Prostate gland (tissue), 2 donors: ENCODE measurements at regions of chr16 and their contacts with region 1.

Region 1: DNA sequence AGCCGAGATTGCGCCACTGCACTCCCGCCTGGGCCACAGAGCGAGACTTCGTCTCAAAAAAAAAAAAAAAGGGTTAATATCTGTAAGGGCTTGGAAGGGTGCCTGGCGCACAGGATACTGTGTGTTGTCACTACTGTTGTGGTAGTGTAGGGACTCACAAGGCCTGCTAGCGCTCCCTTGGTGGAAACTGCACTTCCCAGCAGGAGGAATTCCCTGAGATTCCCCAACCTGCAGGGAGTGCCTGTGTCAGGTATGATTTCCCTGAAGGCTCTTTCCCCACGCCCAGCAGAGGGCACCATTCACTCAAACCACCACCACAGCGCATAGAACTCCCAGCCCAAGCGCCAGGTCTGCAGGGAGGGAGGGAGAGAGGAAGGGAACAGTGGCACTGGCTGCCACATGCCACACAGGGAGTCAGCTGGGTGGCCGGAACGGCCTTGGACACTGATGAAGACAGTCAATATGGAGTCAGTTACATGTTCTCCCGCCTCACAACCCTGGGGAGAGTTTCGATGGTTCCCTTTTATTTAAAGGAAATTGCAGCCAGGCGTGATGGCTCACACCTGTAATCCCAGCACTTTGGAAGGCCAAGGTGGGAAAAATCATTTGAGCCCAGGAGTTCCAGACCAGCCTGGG is 32.7 kb upstream of the CDH1 start:
- DNase-seq: peak; percentile 91
- H3K4me3 ChIP-seq: no peak overlapping the region
- H3K27ac ChIP-seq: no peak overlapping the region
- H3K4me1 ChIP-seq: no peaks in the 10 kb centered on the region
- H3K27me3 ChIP-seq: no peaks in the 10 kb centered on the region
- CTCF ChIP-seq: peak; percentile 68 to 94 (median 90)
- POLR2A ChIP-seq: no peak

Region 2: GRCh38 chr16:68590201-68590994 is 114.0 kb before region 1 on chr16:
- intact Hi-C with region 1: loop called (anchors 10 kb)
- DNase-seq: peak; percentile 63
- H3K4me3 ChIP-seq: no peak overlapping the region
- H3K27ac ChIP-seq: no peak overlapping the region
- H3K4me1 ChIP-seq: no peaks in the 10 kb centered on the region
- H3K27me3 ChIP-seq: no peaks in the 10 kb centered on the region
- CTCF ChIP-seq: peak; percentile 32 to 85 (median 68)
- POLR2A ChIP-seq: no peak

Region 3: DNA sequence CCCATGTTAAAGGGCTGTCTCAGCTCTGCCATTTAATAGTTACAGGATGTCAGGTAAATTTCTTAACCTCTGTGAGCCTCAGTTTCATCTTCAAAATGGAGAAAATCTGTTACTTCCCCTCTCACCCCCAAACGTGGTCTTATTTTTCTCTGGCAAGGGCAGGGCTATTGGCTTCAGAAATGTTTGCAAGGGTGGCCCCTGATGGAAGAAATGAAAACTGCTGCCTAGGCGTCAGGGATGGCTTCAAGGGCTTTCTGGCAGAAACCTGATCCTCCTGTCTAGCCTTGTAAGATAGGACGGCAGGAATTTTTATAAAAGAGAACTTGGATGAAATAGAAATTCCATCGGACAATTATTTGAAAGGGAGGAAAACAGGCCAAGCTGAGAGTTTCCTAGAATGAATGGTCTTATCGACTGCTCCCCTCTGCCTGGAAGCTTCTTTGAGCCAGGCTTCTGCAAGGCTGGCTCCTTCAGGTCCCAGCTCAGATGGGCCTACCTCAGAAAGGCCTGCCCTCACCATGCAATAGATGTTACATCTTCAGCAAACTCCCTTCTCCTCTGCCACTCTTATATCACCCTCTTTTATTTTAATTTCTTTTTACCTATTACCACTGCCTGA is 96.0 kb after region 1 on chr16:
- intact Hi-C with region 1: loop called (anchors 2 kb)
- DNase-seq: peak; percentile 83
- H3K4me3 ChIP-seq: no peak overlapping the region
- H3K27ac ChIP-seq: peak overlapping the region; percentile 21 to 53
- H3K4me1 ChIP-seq: peaks cover 14% of the 10 kb centered on the region
- H3K27me3 ChIP-seq: no peaks in the 10 kb centered on the region
- CTCF ChIP-seq: peak; percentile 53 to 90 (median 80)
- POLR2A ChIP-seq: no peak

Region 4: DNA sequence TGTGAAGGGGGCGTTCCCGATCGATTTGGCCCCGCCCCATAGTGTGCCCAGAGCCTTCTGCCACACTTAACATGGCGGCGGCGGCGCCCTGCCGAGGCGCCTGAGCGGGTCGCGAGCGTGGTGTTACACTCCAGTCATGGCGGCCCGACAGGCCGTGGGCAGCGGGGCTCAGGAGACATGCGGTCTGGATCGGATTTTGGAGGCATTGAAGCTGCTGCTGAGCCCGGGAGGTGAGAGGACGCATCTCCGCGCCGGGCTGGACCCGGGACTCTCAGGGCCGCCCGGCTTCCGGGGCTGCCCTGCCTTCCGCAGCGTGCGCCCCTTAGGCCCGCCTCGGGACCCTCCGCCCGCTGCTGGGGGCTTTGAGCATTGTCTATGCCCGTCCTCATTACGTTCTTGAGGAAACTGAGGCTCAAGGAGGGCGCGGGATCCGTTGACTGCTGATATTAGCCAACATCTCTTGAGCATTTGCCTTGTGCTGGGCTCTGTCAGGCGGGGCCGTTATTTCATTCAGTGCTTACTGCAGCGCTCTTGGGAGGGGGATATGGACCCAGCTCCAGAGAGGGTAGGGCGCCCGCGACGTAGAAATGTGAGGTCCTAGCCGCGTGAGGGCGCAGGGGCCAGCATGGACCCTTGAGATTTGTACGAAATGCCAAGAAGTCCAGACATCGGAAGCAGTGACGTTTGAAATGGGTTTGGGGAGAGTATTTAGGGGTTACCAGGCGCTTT is 139.3 kb after region 1 on chr16 and contains the start of gene TANGO6:
- intact Hi-C with region 1: loop called (anchors 5 kb)
- DNase-seq: peak; percentile 76
- H3K4me3 ChIP-seq: peak within 1 kb of the TSS; percentile 69 to 75
- H3K27ac ChIP-seq: peak within 1 kb of the TSS; percentile 83 to 84
- H3K4me1 ChIP-seq: peaks cover 2% of the 10 kb centered on the region
- H3K27me3 ChIP-seq: no peaks in the 10 kb centered on the region
- CTCF ChIP-seq: peak in 1 of 4 experiments; percentile 17
- POLR2A ChIP-seq: no peak
- total RNA-seq, gene TANGO6: 13.1 to 28.6 TPM

Region 5: DNA sequence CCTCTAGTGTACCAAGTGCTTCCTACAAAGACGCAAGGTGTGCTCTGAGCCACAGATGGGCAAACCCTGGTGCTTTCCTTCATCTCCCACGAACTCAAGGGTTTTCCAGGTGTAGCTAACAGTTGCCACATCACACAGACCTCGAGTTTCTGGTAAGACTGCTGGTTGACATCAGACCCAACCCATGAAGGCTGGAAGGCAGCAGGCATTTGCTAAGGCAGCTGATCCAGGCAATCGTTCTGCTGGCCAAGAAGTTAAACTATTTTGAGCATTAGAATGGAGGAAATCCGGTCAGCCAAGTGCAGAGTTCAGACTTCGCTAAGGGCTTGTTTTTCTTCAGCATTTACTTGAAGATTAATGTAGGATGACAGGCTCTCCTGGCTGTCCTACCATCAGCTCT is 412.6 kb after region 1 on chr16:
- intact Hi-C with region 1: loop called (anchors 5 kb)
- DNase-seq: no peak
- H3K4me3 ChIP-seq: no peak overlapping the region
- H3K27ac ChIP-seq: no peak overlapping the region
- H3K4me1 ChIP-seq: no peaks in the 10 kb centered on the region
- H3K27me3 ChIP-seq: no peaks in the 10 kb centered on the region
- CTCF ChIP-seq: no peak
- POLR2A ChIP-seq: no peak